ENCODE measurements at regions of chr1 and their contacts with region 1.

Region 1: DNA sequence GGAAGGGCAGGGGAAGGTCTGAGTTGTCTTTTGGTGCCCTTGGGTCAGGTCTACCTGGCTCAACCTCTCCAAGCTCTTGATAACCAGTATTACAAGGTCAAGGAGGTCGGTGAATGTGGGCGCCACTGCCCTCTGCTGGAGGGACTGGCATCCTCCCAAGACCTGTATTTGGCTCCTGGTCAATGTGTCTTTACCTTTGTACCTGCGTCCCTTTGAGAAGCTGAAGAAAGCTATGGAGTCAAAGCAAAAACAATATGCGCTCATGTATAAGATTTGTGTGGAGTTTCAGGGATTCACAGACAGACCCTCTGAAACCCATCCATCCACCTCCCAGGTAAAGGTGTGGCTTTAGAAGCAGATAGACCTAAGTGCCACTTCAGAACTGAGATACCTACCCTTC is 61.8 kb upstream of the NBL1 start:
- DNase-seq: peak; percentile 87
- ATAC-seq: peak; percentile 99
- H3K4me3 Mint-ChIP-seq: no peak overlapping the region
- H3K27ac Mint-ChIP-seq: no peak overlapping the region
- H3K4me1 Mint-ChIP-seq: peaks cover 6% of the 10 kb centered on the region
- H3K27me3 Mint-ChIP-seq: no peaks in the 10 kb centered on the region
- CTCF ChIP-seq: peak; percentile 81

Region 2: DNA sequence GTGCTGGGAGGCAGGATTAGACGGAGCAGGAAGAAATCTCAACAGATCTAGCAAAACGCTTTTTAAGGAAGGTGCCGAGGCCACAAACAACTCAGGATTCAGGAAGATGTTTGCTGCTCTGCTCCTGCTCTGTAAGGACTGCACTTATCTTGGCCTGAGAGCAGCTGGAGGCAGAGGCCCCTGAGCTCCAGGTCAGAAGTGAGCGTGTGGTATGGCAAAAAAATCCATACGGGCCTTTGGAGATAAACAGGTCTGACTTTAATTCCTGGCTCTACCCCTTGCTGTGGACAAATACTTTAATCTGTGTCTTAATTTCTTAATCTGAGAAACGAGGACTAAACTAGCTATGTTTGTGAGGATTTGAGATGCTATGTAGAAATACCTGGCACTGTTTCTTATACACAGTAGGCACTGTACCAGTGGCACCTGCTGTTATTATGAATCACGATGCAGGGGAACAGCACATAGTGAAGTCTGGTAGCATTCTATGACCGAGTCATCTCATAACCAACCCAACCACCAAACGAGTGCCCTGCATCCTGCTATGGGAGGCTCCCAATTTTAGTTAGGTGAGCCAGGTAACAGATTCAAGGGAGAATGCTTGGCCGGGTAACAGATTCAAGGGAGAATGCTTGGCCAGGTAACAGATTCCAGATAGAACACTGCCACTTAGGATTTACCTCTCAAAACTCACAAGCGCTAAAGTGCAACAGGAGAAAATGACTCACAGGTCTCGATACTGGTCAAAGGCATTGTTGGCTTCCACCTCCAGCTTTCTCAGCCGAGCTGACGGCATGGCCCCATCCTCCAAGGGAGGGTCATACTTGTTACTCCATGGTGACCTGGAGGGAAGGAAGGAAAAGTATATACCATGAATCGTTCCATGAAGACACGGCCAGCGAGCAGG is 204.2 kb before region 1 on chr1:
- CTCF ChIA-PET with region 1: interaction called, 11 read pairs
- POLR2A ChIA-PET with region 1: no interaction called
- intact Hi-C with region 1: no loop called
- DNase-seq: peak; percentile 29
- ATAC-seq: peak; percentile 68
- H3K4me3 Mint-ChIP-seq: no peak overlapping the region
- H3K27ac Mint-ChIP-seq: peak overlapping the region; percentile 55
- H3K4me1 Mint-ChIP-seq: peaks cover 26% of the 10 kb centered on the region
- H3K27me3 Mint-ChIP-seq: no peaks in the 10 kb centered on the region
- CTCF ChIP-seq: no peak

Region 3: DNA sequence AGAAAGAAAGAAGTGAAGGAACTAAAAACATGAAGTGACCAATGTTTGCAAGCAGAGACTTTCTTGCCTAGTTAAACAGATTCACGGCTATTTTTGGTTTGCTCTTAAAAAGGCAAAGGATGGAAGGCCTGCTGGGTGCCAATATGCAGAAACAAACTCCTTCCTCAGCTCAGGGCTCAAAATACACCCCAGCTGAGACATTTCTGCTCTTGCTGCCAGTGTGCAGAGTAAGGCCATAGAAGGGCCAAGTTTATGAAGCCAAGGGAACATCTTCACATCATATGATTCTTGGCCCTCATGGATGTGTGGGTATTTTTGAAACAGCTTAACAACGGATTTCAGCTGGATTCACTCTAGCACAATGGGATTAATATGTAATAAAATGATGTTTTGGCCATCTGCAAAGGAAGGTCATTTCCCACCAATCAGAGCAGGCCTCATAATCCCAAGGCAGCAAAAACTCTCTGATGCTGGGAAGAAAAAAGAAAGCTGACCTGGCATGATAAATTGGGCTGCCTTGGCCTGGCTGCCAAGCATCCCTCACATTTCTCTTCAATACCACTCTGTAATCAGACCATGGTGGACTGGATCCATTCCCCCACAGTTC is 167.7 kb before region 1 on chr1:
- CTCF ChIA-PET with region 1: interaction called, 20 read pairs
- POLR2A ChIA-PET with region 1: no interaction called
- intact Hi-C with region 1: no loop called
- DNase-seq: no peak
- ATAC-seq: no peak
- H3K4me3 Mint-ChIP-seq: no peak overlapping the region
- H3K27ac Mint-ChIP-seq: peak overlapping the region; percentile 58
- H3K4me1 Mint-ChIP-seq: peaks cover 66% of the 10 kb centered on the region
- H3K27me3 Mint-ChIP-seq: no peaks in the 10 kb centered on the region
- CTCF ChIP-seq: no peak

Region 4: DNA sequence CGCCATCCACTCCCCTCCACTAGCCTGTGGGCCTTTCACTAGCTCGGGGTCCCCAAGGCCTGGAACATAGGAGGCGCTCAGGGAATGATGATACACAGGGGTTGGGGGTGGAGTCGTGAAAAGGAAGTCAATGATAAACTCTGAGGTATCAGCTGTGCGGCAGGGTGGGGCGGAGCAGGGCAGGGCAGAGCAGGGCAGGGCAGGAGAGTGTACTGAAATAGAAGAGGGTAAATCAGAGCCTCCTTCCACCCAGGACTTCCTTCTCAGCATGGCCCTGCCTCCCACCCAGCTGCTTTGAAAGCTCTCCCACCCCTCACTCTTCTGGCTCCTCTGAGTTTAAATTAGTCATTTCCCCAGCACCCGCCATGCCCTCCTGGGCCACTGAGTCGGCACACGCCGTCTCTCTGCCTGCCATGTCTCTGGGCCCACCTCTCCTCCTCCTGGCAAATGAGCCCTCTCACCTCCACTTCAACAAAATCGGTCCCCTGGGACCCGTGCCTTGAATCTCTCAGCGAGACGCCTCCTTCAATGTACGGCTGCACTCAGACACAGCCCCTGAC is 113.8 kb before region 1 on chr1:
- CTCF ChIA-PET with region 1: interaction called, 10 read pairs
- POLR2A ChIA-PET with region 1: no interaction called
- intact Hi-C with region 1: no loop called
- DNase-seq: peak; percentile 85
- ATAC-seq: peak; percentile 84
- H3K4me3 Mint-ChIP-seq: peak overlapping the region; percentile 59
- H3K27ac Mint-ChIP-seq: peak overlapping the region; percentile 94
- H3K4me1 Mint-ChIP-seq: peaks cover 88% of the 10 kb centered on the region
- H3K27me3 Mint-ChIP-seq: no peaks in the 10 kb centered on the region
- CTCF ChIP-seq: no peak

Region 5: DNA sequence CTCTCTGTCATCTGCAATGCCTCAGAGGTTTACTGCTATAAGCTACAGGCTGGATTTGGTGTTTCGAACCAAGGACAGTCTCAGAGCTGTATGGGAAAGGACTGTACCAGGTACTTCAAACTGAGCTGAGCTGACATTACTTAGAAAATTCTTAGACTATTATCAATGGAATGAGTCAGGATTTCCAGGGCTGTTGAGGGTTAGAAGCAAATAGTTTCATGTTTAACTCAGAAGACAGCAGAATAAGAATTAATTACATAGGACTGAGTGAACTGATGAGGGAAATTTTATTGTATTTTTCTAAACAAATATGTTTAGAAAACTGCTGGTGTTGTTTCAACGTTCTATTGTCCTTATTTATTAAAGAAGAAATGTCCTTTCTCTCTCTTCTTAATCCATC is 22.7 kb before region 1 on chr1:
- CTCF ChIA-PET with region 1: interaction called, 11 read pairs
- POLR2A ChIA-PET with region 1: no interaction called
- intact Hi-C with region 1: no loop called
- DNase-seq: no peak
- ATAC-seq: no peak
- H3K4me3 Mint-ChIP-seq: no peak overlapping the region
- H3K27ac Mint-ChIP-seq: no peak overlapping the region
- H3K4me1 Mint-ChIP-seq: no peaks in the 10 kb centered on the region
- H3K27me3 Mint-ChIP-seq: peaks cover 6% of the 10 kb centered on the region
- CTCF ChIP-seq: no peak

Measured in activated CD8-positive, alpha-beta T cell treated with anti-CD3 and anti-CD28 coated beads for 36 hours (primary cell).